Prostate gland (tissue), 2 donors: ENCODE measurements at regions of chr17 and their contacts with region 1.

Region 1: DNA sequence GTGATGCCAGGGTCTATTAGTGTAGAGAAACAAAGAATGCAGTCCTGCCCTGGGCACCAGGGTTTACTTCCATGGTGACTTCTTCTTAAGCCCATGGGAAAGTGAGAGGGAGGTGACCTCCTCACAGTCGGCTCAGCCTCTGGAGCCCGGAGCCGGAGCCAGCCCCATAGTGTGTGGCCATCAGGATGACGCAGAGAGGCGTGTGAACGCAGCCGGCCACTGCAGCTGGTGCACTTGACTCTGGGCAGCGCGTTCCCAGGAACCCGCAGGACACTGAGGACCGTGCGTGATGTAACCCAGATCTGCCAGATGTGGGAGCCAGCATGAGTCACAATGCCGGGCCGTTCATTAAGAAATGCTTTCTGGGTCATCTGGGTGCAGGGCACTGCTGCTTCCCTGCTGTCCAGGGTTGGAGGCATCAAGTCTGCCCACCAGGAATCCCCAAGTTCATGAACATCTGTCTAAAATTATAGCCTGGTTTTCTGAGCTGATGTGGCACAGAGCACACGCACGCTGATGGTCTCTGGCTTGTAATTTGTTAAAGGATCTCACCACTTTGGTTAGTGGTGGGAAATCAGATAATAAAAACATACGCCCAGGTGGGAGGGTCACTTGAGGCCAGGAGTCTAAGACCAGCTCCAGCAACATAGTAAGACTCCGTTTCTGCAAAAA is 114.1 kb downstream of the PITPNC1 start:
- DNase-seq: peak; percentile 24
- H3K4me3 ChIP-seq: no peak overlapping the region
- H3K27ac ChIP-seq: peak overlapping the region; percentile 26 to 34
- H3K4me1 ChIP-seq: no peaks in the 10 kb centered on the region
- H3K27me3 ChIP-seq: no peaks in the 10 kb centered on the region
- CTCF ChIP-seq: no peak
- POLR2A ChIP-seq: no peak

Region 2: GRCh38 chr17:67531291-67531690 is 40.1 kb after region 1 on chr17:
- intact Hi-C with region 1: loop called (anchors 5 kb)
- DNase-seq: no peak
- H3K4me3 ChIP-seq: no peak overlapping the region
- H3K27ac ChIP-seq: no peak overlapping the region
- H3K4me1 ChIP-seq: peaks cover 4% of the 10 kb centered on the region
- H3K27me3 ChIP-seq: no peaks in the 10 kb centered on the region
- CTCF ChIP-seq: no peak
- POLR2A ChIP-seq: no peak